Naive thymus-derived CD4-positive, alpha-beta T cell (primary cell): ENCODE measurements at regions of chr18 and their contacts with region 1.

Region 1: DNA sequence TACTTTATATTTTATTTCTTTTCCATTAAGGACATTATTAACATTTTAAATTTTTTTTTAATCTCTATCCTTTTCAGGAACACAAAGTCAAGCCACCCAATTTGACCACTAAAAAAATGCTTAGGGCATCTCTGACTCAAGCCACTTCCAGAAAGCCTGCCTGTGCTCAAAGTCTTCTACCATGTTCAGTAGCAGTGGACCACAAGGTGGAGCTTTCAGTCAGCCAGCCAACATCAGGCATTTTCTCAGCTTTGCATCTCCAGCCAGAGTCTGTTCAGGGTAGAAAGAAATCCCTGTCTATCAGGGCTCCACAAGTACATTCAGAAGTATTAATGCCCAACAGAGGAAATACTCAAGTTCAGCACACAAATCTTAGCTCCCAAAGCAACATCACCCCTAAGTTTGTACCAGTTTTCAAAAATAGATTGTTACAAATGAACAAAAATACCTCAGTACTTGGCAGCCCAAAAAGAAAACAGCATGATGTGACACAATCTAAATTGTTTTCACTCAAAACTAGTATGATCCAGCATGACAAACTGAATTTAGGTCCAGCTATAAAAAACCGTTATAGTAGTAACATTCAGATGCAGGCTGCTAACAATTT is 37.6 kb downstream of the C18orf63 start:
- DNase-seq: peak in 8 of 9 donors; percentile 37 to 79 (median 70)
- ATAC-seq: peak; percentile 82
- H3K4me3 ChIP-seq: no peak overlapping the region
- H3K4me3 Mint-ChIP-seq: no peak overlapping the region
- H3K27ac ChIP-seq: no peak overlapping the region
- H3K27ac Mint-ChIP-seq: peak overlapping the region in 2 of 9 donors; percentile 58 to 89
- H3K4me1 ChIP-seq: peaks cover 0 to 4% of the 10 kb centered on the region in 2 donors
- H3K4me1 Mint-ChIP-seq: peaks cover 3 to 23% (median 18%) of the 10 kb centered on the region in 7 donors
- H3K27me3 ChIP-seq: no peaks in the 10 kb centered on the region
- H3K27me3 Mint-ChIP-seq: peaks cover 0 to 24% (median 0%) of the 10 kb centered on the region in 5 donors

Region 2: GRCh38 chr18:74370115-74370514 is 16.8 kb after region 1 on chr18:
- CTCF ChIA-PET with region 1: interaction called, 13 read pairs
- POLR2A ChIA-PET with region 1: interaction called, 5 read pairs
- intact Hi-C with region 1: loop called (anchors 1 kb)
- DNase-seq: no peak
- ATAC-seq: no peak
- H3K4me3 ChIP-seq: no peak overlapping the region
- H3K4me3 Mint-ChIP-seq: peak overlapping the region in 3 of 10 donors; percentile 8 to 30 (median 30)
- H3K27ac ChIP-seq: no peak overlapping the region
- H3K27ac Mint-ChIP-seq: peak overlapping the region in 3 of 9 donors; percentile 42 to 88 (median 55)
- H3K4me1 ChIP-seq: peaks cover 22 to 54% of the 10 kb centered on the region in 2 donors
- H3K4me1 Mint-ChIP-seq: peaks cover 26 to 72% (median 54%) of the 10 kb centered on the region in 7 donors
- H3K27me3 ChIP-seq: peaks cover 0 to 6% of the 10 kb centered on the region in 2 donors
- H3K27me3 Mint-ChIP-seq: peaks cover 0 to 28% (median 0%) of the 10 kb centered on the region in 5 donors

Region 3: DNA sequence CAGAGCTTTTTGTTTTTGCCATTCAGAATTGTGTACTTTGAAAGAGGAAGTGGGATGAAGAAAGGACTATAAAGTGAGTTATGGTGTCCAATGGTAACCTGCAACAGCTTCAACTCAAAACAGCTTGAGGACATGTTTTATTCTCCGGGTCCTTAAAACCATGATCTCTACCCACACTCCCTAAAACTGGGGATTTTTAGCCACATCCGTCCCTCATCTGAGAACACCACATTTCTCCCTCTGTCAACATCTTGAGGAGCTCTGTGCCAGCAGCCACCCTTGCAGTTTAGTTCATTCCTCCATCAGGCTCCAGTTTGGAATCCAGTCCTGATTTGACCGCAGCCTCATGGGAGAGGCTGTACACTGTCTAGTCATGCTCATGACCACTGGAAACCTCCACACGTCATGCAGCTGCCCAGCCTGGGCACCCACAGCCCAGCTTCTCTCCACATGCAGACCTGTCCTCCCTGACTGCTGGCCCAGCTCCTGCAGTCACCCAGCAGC is 25.0 kb after region 1 on chr18:
- CTCF ChIA-PET with region 1: interaction called, 25 read pairs
- POLR2A ChIA-PET with region 1: interaction called, 6 read pairs
- intact Hi-C with region 1: loop called (anchors 1 kb)
- DNase-seq: peak in 7 of 9 donors; percentile 48 to 85 (median 72)
- ATAC-seq: peak; percentile 65
- H3K4me3 ChIP-seq: no peak overlapping the region
- H3K4me3 Mint-ChIP-seq: peak overlapping the region; percentile 61 to 84 (median 78)
- H3K27ac ChIP-seq: peak overlapping the region; percentile 53
- H3K27ac Mint-ChIP-seq: peak overlapping the region; percentile 91 to 98 (median 93)
- H3K4me1 ChIP-seq: peaks cover 10 to 47% of the 10 kb centered on the region in 2 donors
- H3K4me1 Mint-ChIP-seq: peaks cover 28 to 67% (median 62%) of the 10 kb centered on the region in 7 donors
- H3K27me3 ChIP-seq: no peaks in the 10 kb centered on the region
- H3K27me3 Mint-ChIP-seq: peaks cover 0 to 6% (median 0%) of the 10 kb centered on the region in 5 donors

Region 4: GRCh38 chr18:74407888-74408287 is 54.6 kb after region 1 on chr18:
- CTCF ChIA-PET with region 1: interaction called, 3 read pairs
- POLR2A ChIA-PET with region 1: no interaction called
- intact Hi-C with region 1: loop called in 1 of 2 experiments (anchors 2 kb)
- DNase-seq: peak in 4 of 9 donors; percentile 12 to 28 (median 13)
- ATAC-seq: peak; percentile 41
- H3K4me3 ChIP-seq: peak overlapping the region; percentile 35
- H3K4me3 Mint-ChIP-seq: peak overlapping the region; percentile 71 to 93 (median 84)
- H3K27ac ChIP-seq: peak overlapping the region; percentile 70
- H3K27ac Mint-ChIP-seq: peak overlapping the region; percentile 92 to 99 (median 96)
- H3K4me1 ChIP-seq: peaks cover 5 to 19% of the 10 kb centered on the region in 2 donors
- H3K4me1 Mint-ChIP-seq: peaks cover 15 to 45% (median 37%) of the 10 kb centered on the region in 7 donors
- H3K27me3 ChIP-seq: no peaks in the 10 kb centered on the region
- H3K27me3 Mint-ChIP-seq: peaks cover 0 to 5% (median 0%) of the 10 kb centered on the region in 5 donors

Region 5: GRCh38 chr18:74425876-74426275 is 72.6 kb after region 1 on chr18:
- CTCF ChIA-PET with region 1: no interaction called
- POLR2A ChIA-PET with region 1: no interaction called
- intact Hi-C with region 1: no loop called
- DNase-seq: no peak
- ATAC-seq: no peak
- H3K4me3 ChIP-seq: no peak overlapping the region
- H3K4me3 Mint-ChIP-seq: no peak overlapping the region
- H3K27ac ChIP-seq: no peak overlapping the region
- H3K27ac Mint-ChIP-seq: peak overlapping the region in 1 of 9 donors; percentile 48
- H3K4me1 ChIP-seq: no peaks in the 10 kb centered on the region
- H3K4me1 Mint-ChIP-seq: peaks cover 0 to 15% (median 5%) of the 10 kb centered on the region in 7 donors
- H3K27me3 ChIP-seq: no peaks in the 10 kb centered on the region
- H3K27me3 Mint-ChIP-seq: peaks cover 0 to 10% (median 0%) of the 10 kb centered on the region in 5 donors

Region 6: DNA sequence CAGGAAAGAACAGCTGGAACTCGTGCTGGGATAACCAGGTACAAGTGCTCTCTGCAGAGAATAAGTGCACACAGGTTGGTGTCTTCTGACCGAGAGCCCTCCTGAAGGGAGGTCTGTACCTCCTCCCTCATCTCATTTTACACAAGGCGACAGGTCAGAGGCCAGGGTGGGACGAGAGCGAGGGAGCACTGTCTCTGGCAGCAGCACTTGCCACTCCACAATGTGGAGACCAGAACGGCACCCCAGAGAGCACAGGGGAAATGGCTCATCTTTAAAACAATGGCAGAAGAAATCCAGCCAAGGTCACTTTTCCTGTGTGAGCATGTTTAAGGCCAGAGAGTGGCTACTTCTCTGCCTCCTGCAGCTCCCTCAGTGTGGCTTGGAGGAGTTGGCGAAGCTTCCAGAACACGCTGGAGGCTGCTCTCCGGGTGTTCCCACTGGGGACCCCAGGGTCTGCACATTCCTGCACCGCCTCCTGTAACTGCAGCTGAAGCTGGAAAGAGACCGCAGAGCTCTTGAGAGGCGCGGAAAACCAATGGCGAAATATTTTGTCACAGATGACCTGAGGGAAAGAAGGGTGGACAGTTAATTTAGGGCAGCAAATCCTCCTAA is 83.0 kb after region 1 on chr18:
- CTCF ChIA-PET with region 1: no interaction called
- POLR2A ChIA-PET with region 1: no interaction called
- intact Hi-C with region 1: no loop called
- DNase-seq: no peak
- ATAC-seq: no peak
- H3K4me3 ChIP-seq: no peak overlapping the region
- H3K4me3 Mint-ChIP-seq: no peak overlapping the region
- H3K27ac ChIP-seq: no peak overlapping the region
- H3K27ac Mint-ChIP-seq: no peak overlapping the region
- H3K4me1 ChIP-seq: no peaks in the 10 kb centered on the region
- H3K4me1 Mint-ChIP-seq: peaks cover 3 to 16% (median 5%) of the 10 kb centered on the region in 7 donors
- H3K27me3 ChIP-seq: no peaks in the 10 kb centered on the region
- H3K27me3 Mint-ChIP-seq: peaks cover 0 to 9% (median 0%) of the 10 kb centered on the region in 5 donors

Region 7: DNA sequence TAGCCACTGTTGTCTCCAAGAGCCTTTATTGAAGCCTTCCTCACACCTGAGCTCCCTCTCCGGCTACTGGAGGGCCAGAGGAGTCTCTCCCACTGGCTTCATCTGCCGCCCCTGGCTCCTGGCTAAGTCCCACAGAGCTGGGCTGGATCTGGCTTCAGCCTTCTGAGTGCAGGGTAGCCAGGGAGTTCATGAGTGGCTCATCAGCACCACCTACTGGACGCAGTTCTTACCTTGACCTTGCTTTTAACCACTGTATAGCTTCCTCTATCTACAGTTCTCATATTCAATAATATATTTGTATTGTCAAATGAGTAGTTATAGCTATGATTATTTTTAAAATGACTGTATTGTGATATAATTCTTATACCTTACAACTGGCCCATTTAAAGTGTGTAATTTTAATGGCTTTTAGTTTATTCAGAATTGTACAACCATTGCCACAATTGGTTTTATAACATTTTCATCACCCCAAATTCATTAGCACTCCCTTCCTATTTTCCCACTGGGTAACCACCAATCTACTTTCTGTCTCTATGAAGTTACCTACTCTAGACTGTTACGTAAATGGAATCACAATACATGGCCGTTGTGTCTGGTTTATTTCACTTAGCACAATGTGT is 198.8 kb after region 1 on chr18:
- CTCF ChIA-PET with region 1: interaction called, 24 read pairs
- POLR2A ChIA-PET with region 1: interaction called, 3 read pairs
- intact Hi-C with region 1: loop called (anchors 1 kb)
- DNase-seq: peak; percentile 39 to 69 (median 63)
- ATAC-seq: peak; percentile 97
- H3K4me3 ChIP-seq: no peak overlapping the region
- H3K4me3 Mint-ChIP-seq: no peak overlapping the region
- H3K27ac ChIP-seq: no peak overlapping the region
- H3K27ac Mint-ChIP-seq: peak overlapping the region in 2 of 9 donors; percentile 3 to 70
- H3K4me1 ChIP-seq: no peaks in the 10 kb centered on the region
- H3K4me1 Mint-ChIP-seq: peaks cover 0 to 6% (median 0%) of the 10 kb centered on the region in 7 donors
- H3K27me3 ChIP-seq: no peaks in the 10 kb centered on the region
- H3K27me3 Mint-ChIP-seq: peaks cover 10 to 14% (median 13%) of the 10 kb centered on the region in 5 donors

Region 8: DNA sequence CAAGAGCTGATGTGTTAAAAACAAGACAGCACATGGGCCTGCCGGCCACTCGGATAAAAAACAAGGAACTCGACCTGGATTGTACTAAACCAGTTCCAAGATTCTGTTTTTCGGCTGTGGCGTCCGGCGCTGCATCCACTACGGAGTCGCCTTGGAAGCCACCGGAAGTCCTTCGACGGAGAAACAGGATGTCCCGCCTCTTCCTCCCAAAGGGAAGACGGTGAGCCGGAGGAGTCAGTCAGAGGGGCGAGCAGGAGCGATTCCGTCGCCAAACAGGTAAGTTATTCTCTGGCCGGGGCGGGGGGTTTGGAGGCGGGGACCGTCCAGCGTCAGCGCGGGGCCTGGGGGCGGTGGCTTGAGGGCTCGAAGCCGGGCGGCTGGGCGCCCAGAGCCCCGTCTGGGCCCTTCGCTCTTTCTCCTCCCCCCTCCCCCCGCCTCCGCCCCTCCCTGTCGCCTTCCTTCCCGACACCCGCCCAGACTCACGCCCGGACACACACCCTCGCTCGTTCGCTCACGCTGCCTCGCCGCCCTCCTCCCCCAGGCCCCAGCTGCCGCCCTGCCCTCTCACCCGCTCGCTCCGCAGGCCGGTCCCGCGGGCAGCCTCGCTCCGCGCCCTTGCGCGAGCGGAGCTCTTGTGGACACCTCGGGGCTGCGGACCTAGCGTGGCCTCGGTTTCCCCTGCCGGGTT is 244.5 kb after region 1 on chr18 and contains the start of gene ZNF407:
- CTCF ChIA-PET with region 1: interaction called, 3 read pairs
- POLR2A ChIA-PET with region 1: no interaction called
- intact Hi-C with region 1: loop called in 1 of 2 experiments (anchors 5 kb)
- DNase-seq: peak; percentile 77 to 94 (median 90)
- ATAC-seq: peak; percentile 84
- H3K4me3 ChIP-seq: peak within 1 kb of the TSS; percentile 100
- H3K4me3 Mint-ChIP-seq: peak within 1 kb of the TSS; percentile 89 to 96 (median 95)
- H3K27ac ChIP-seq: peak within 1 kb of the TSS; percentile 88
- H3K27ac Mint-ChIP-seq: peak within 1 kb of the TSS; percentile 95 to 99 (median 98)
- H3K4me1 ChIP-seq: peaks cover 26 to 27% of the 10 kb centered on the region in 2 donors
- H3K4me1 Mint-ChIP-seq: peaks cover 33 to 74% (median 61%) of the 10 kb centered on the region in 7 donors
- H3K27me3 ChIP-seq: no peaks in the 10 kb centered on the region
- H3K27me3 Mint-ChIP-seq: no peaks in the 10 kb centered on the region
- total RNA-seq, gene ZNF407: 23.1 to 31.3 (median 29.7) TPM

Region 9: GRCh38 chr18:76349067-76349715 is 1995.9 kb after region 1 on chr18:
- CTCF ChIA-PET with region 1: no interaction called
- POLR2A ChIA-PET with region 1: no interaction called
- intact Hi-C with region 1: loop called in 1 of 2 experiments (anchors 10 kb)
- DNase-seq: peak in 8 of 9 donors; percentile 42 to 70 (median 60)
- ATAC-seq: peak; percentile 68
- H3K4me3 ChIP-seq: no peak overlapping the region
- H3K4me3 Mint-ChIP-seq: peak overlapping the region in 5 of 10 donors; percentile 4 to 49 (median 12)
- H3K27ac ChIP-seq: no peak overlapping the region
- H3K27ac Mint-ChIP-seq: peak overlapping the region in 2 of 9 donors; percentile 5 to 39
- H3K4me1 ChIP-seq: peaks cover 0 to 3% of the 10 kb centered on the region in 2 donors
- H3K4me1 Mint-ChIP-seq: peaks cover 4 to 9% (median 7%) of the 10 kb centered on the region in 7 donors
- H3K27me3 ChIP-seq: no peaks in the 10 kb centered on the region
- H3K27me3 Mint-ChIP-seq: peaks cover 0 to 9% (median 0%) of the 10 kb centered on the region in 5 donors